HEK293 (cell line): ENCODE measurements at regions of chr3 and their contacts with region 1.

Region 1: DNA sequence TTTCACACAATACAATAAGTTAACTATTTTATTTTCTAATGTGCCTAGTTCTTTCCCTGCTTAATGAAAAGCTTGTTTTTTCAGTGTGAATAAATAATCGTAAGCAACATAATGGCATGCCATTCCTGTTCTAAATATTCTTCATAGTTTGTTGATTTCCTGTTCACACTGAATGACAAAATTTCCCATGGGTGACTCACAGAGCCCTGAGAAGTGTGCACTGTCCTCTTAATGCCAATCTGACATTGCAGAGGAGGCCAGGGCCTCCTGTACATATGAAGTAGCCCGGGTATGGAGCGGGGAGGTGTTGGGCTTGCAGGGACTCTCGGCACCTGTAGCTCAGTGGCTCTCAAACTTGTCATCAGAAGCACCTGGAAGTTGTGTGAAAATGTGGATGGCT is 24.3 kb downstream of the CCR3 start:
- H3K4me3 ChIP-seq: no peak overlapping the region
- H3K27ac ChIP-seq: no peak overlapping the region
- H3K4me1 ChIP-seq: no peaks in the 10 kb centered on the region
- CTCF ChIP-seq: no peak

Region 2: GRCh38 chr3:46252980-46253379 is 13.6 kb before region 1 on chr3:
- CTCF ChIA-PET with region 1: no interaction called
- POLR2A ChIA-PET with region 1: no interaction called
- H3K4me3 ChIP-seq: no peak overlapping the region
- H3K27ac ChIP-seq: no peak overlapping the region
- H3K4me1 ChIP-seq: no peaks in the 10 kb centered on the region
- CTCF ChIP-seq: no peak

Region 3: GRCh38 chr3:46276502-46277099 is 10.0 kb after region 1 on chr3:
- CTCF ChIA-PET with region 1: interaction called, 12 read pairs
- POLR2A ChIA-PET with region 1: no interaction called
- H3K4me3 ChIP-seq: no peak overlapping the region
- H3K27ac ChIP-seq: no peak overlapping the region
- H3K4me1 ChIP-seq: no peaks in the 10 kb centered on the region
- CTCF ChIP-seq: no peak